Mucosa of descending colon (tissue), 3 donors: ENCODE measurements at regions of chr6 and their contacts with region 1.

Region 1: DNA sequence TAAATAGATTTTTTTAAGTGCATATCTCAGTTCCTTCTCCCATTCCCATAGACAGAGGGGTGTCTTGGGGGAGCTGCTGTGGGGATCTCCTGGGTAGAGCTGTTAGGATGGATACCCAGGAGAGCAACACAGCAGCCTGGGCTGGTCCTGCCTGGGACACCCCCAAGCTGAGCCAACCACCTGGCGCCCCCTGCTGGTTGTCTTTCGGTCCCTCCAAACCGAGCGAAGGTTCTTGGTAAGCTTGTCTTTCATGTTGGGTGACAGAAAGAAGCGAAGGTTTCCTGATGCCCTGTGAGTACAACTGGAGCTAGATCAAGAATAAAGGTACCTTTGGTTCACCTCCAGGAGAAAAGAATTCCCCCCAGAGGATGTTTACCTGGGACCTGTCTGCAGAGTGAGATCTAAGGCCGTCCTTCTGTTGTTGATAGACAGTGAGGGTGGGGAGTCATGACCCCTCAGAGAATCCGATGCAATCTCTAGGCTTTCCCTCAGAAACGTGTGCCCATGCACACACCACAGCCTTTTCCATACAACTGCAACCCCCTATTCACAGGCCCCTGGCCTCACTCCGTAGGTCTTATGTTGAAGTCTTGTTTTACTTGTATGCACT is 50.8 kb downstream of the SNX9 start:
- DNase-seq: peak; percentile 81 to 91 (median 88)
- ATAC-seq: peak; percentile 91
- H3K4me3 ChIP-seq: no peak overlapping the region
- H3K4me1 ChIP-seq: no peaks in the 10 kb centered on the region
- CTCF ChIP-seq: peak; percentile 49

Region 2: GRCh38 chr6:157756708-157757429 is 117.0 kb before region 1 on chr6:
- intact Hi-C with region 1: loop called (anchors 10 kb)
- DNase-seq: peak; percentile 86 to 96 (median 87)
- ATAC-seq: peak; percentile 90
- H3K4me3 ChIP-seq: no peak overlapping the region
- H3K4me1 ChIP-seq: peaks cover 4% of the 10 kb centered on the region
- CTCF ChIP-seq: peak; percentile 63

Region 3: DNA sequence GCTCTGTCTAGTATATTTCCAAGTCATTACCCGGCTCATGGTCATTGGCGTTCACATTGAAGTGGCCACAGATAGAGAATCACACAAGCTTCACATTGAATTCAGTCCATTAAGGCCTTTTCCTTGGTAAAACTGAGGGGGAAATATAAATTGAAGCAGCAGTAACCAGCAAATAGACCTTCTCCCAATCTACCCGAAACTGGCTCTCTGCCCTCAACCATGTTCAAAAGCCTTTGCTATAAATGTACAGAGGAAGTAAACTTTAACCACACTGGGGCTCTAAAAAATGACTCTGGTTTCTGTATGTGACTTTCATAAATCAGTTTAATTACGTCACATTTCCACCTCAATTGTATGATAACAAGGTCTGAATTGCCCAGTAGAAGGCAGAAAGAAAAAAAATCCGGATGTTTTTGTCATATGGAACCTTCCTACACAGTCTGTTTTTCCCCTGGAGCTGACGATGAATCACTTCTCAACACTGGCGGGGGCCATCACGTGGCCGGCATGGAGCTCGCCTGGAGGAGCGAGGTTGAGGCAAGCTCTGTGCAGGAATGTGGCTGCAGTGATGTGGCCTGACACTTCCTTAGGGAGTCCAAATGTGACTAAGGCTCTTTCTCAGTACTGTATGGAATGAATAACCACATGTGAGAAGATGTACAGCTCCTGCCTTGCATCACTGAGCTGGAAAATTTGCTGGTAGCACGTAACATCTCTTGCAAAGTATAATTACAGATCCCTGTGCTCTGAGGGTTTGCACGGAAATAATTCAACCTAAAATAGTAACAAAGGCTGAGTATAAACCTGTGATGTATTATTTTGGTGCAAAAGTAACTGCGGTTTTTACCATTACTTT is 109.4 kb before region 1 on chr6:
- intact Hi-C with region 1: loop called (anchors 10 kb)
- DNase-seq: peak; percentile 78 to 91 (median 83)
- ATAC-seq: peak; percentile 63
- H3K4me3 ChIP-seq: peak overlapping the region; percentile 2
- H3K4me1 ChIP-seq: peaks cover 25% of the 10 kb centered on the region
- CTCF ChIP-seq: no peak

Region 4: GRCh38 chr6:157813191-157813590 is 60.6 kb before region 1 on chr6:
- intact Hi-C with region 1: no loop called
- DNase-seq: peak in 1 of 3 donors; percentile 26
- ATAC-seq: peak; percentile 28
- H3K4me3 ChIP-seq: no peak overlapping the region
- H3K4me1 ChIP-seq: no peaks in the 10 kb centered on the region
- CTCF ChIP-seq: no peak